ENCODE measurements at regions of chr4 and their contacts with region 1.

Region 1: GRCh38 chr4:168995537-168996295 is 14.3 kb downstream of the CBR4 start:
- DNase-seq: no peak
- H3K4me3 ChIP-seq: no peak overlapping the region
- CTCF ChIP-seq: peak; percentile 20

Region 2: GRCh38 chr4:168978001-168978700 is 17.6 kb before region 1 on chr4:
- CTCF ChIA-PET with region 1: interaction called, 24 read pairs
- POLR2A ChIA-PET with region 1: no interaction called
- DNase-seq: peak; percentile 14
- H3K4me3 ChIP-seq: no peak overlapping the region
- CTCF ChIP-seq: no peak

Region 3: GRCh38 chr4:169010125-169011023 is 14.7 kb after region 1 on chr4 and contains the start of gene CBR4:
- CTCF ChIA-PET with region 1: interaction called, 88 read pairs
- POLR2A ChIA-PET with region 1: interaction called, 5 read pairs
- DNase-seq: peak; percentile 94
- H3K4me3 ChIP-seq: peak within 1 kb of the TSS; percentile 77
- CTCF ChIP-seq: peak; percentile 6

Region 4: DNA sequence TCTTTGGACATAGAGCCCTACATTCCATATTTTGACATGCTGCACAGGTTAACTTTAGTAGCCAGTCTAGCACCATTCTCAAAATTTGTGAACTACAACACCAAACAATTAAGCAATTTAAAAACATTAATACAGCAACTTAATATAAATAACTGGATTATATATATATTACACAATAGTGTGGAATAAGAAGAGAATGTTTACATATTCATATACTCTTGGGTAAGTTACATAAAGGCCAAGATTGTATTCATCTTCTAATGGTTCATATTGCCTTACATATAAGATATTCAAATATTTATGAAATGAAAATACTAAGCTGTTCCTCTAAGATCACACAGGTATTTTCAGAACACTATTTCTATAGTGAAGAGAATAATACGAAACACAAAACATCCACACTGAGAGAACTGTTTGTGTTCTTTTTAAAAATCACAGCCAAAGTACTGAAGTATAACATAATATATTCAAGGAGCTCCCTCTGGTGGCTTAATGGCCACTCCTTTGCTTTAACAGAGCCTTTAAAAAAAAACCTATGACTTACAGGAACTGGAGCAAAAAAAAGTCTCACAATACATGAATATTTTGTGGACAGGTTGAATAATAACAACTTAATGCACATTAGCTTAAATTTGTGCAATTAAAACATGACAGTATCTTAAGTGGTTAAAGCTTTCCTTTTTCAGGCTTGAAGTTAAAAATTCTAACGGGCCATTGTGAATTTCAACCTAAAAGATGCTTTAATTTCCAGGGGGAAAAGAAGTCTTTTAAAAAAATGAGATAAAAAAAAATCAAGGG is 570.5 kb after region 1 on chr4:
- CTCF ChIA-PET with region 1: interaction called, 39 read pairs
- POLR2A ChIA-PET with region 1: no interaction called
- DNase-seq: no peak
- H3K4me3 ChIP-seq: no peak overlapping the region
- CTCF ChIP-seq: peak; percentile 33

Region 5: GRCh38 chr4:170027181-170027829 is 1031.6 kb after region 1 on chr4:
- CTCF ChIA-PET with region 1: no interaction called
- POLR2A ChIA-PET with region 1: no interaction called
- DNase-seq: peak; percentile 88
- H3K4me3 ChIP-seq: peak overlapping the region; percentile 83
- CTCF ChIP-seq: no peak

Measured in AG04449 (cell line).